GM18951 (cell line): ENCODE measurements at regions of chr5 and their contacts with region 1.

Region 1: GRCh38 chr5:81506900-81507588 is 113.1 kb upstream of the ACOT12 start:
- POLR2A ChIP-seq: no peak

Region 2: DNA sequence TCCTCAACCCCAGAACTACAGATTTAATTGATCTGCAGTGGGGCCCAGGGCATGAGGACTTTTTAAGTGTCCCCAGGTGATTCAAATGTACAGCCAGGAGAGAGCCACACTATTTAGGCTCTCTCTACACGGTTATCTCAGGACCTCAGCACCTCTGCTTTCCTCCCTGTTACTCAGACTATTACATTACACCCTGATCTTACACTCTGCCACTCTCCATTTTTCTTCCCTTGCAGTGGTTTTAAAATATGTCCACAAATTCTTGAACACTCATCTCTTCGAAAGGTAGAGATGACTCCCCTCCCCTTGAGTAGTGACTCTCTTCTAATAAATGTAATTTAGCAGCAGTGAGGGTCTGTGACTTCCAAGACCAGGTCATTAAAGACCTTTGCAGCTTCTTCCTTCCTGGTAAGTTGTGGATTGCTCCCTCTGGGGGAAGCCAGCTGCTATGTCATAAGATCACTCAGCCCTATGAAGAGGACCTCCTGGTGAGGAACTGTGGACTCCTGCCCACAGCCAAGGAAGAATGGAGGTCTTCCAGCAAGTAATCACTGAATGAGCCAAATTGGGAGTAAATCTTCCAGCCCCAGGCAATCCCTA is 331.4 kb after region 1 on chr5:
- in situ Hi-C with region 1: loop called (anchors 25 kb)
- POLR2A ChIP-seq: no peak

Region 3: GRCh38 chr5:82225525-82226172 is 718.6 kb after region 1 on chr5:
- in situ Hi-C with region 1: loop called (anchors 25 kb)
- POLR2A ChIP-seq: no peak